Activated CD4-positive, alpha-beta T cell treated with anti-CD3 and anti-CD28 coated beads, Interleukin-2, amount 10 ng/mL, durations not matched to agents 24 days and 14 days (primary cell): ENCODE measurements at regions of chr22 and their contacts with region 1.

Region 1: DNA sequence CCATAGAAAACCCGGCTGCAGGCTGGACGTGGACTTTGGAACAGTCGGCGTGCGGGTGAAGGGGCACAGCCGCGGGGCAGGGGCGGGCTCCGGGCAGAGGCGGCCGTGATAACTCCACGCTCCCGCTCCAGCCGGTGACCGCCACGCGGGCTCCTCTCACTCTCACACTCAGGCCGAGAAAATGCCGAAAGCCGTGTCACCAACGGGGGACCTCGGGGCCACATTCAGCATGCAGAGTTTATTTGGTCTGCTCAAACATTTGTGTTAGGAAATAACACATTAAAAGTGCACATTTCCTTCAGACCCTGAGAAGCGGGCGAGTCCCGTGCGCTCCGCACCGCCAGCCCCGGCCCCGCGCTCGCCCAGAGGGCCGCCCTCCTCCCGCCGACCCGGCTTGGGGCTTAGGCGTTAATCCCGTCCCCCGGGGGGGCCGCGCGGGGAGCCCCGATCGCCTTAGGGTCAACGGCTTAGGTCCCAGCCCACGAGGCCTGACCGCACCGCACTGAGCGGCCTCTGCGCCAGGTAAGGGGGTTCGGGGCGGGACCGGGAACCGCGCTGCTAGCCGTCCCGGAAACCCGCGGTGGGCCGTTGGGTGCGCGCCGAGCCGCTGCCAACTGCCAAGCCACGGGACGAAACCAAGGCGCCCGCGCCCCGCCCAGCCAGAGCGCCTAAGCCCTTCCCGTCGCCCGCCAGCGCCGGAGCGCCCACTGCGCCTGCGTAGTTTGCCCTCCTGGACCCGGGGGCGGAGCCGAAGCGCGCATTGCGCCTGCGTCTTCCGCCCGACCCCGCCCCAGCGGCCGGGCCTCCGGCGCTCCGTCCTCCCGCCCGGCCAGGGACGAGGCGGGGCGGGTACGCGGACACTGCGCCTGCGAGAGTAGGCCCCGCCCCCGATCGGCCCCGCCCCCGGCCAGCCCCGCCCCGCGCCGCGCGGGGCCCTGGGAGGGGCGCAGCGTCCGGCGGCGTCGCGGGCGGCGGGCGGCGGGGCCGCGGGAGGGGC is at the start of gene ZBED4:
- DNase-seq: peak; percentile 100
- H3K4me3 Mint-ChIP-seq: peak within 1 kb of the TSS; percentile 92
- H3K27ac Mint-ChIP-seq: peak within 1 kb of the TSS; percentile 94
- H3K4me1 Mint-ChIP-seq: peaks cover 34% of the 10 kb centered on the region
- H3K27me3 Mint-ChIP-seq: peaks cover 5% of the 10 kb centered on the region
- total RNA-seq, gene ZBED4: 18.2 and 19.8 TPM in 2 replicates

Region 2: GRCh38 chr22:49717322-49717919 is 135.8 kb before region 1 on chr22:
- intact Hi-C with region 1: no loop called
- DNase-seq: no peak
- H3K4me3 Mint-ChIP-seq: no peak overlapping the region
- H3K27ac Mint-ChIP-seq: no peak overlapping the region
- H3K4me1 Mint-ChIP-seq: no peaks in the 10 kb centered on the region
- H3K27me3 Mint-ChIP-seq: no peaks in the 10 kb centered on the region

Region 3: DNA sequence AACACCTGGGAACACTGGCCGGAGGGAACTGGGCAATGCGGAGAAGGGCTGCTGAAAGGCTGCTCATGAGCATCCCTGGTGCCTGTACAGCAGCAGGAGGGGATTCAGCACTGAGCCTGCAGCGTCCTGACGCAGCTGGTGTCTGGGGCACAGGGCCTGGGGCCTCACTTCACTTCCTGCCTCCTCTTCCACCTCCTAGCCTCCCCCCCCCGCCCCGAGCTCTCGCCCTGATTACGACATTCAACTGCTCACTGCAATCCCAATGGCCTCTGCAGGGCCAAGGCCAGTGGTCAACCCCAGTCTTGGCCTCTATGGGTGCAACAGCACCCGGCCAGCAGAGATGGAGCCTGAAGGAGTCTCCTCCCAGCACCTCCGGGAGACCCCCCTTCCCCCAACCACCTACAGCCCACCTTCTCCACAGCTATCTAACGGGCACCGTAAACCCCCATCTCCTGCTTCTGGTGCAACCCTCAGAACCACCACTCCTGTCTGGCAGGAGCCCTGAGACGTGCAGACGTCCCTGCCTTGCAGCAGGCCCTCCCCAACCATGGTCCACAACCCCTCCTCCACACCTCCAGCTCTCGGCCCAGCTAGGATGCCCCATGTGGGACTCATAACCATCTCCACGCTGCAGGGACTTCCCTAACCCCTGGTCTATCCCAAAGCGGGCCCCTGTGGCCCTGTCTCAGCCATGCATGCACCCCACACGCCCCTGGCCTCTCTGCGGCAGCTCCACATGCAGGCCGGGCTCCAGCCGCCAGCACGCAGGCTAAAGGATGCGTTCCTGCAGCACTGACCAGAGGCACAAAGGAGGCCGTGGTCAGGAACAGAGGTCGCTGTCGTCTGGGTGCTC is 63.7 kb before region 1 on chr22:
- intact Hi-C with region 1: no loop called
- DNase-seq: peak; percentile 72
- H3K4me3 Mint-ChIP-seq: peak overlapping the region; percentile 71
- H3K27ac Mint-ChIP-seq: peak overlapping the region; percentile 79
- H3K4me1 Mint-ChIP-seq: peaks cover 51% of the 10 kb centered on the region
- H3K27me3 Mint-ChIP-seq: no peaks in the 10 kb centered on the region

Region 4: DNA sequence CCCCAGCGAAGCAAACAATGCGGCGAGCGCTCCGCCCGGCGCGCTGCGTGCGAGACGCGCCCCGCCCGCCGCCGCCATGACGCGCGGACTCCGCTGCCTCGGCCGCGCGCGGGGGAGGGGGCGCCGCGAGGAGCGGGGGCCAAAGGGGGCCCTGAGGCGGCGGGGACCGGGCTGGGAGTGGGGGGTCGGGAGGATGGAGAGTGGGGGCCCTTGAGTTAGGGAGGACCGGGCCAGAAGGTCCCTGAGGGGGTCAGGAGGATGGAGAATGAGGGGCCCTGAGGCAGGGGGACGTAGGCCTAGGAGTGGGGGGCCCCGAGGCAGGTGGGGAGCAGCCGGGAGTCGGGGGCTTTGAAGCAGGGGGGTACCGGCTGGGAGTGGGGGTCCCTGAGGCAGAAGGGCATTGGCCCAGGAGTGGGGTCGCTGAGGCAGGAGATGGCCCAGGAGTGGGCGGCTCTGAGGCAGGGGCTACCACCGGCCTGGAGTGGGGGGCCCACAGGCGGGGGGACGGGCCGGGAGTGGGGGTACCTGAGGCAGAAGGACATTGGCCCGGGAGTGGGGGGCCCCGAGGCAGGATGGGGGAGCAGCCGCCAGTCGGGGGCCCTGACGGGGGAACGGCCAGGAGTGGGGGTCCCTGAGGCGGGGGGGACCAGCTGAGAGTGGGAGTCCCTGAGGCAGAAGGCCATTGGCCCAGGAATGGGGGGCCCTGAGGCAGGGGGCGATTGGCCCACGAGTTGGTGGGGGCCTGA is 25.2 kb before region 1 on chr22 and contains the start of gene BRD1:
- intact Hi-C with region 1: loop called (anchors 2 kb)
- DNase-seq: peak; percentile 90
- H3K4me3 Mint-ChIP-seq: peak within 1 kb of the TSS; percentile 93
- H3K27ac Mint-ChIP-seq: peak within 1 kb of the TSS; percentile 89
- H3K4me1 Mint-ChIP-seq: peaks cover 42% of the 10 kb centered on the region
- H3K27me3 Mint-ChIP-seq: peaks cover 3% of the 10 kb centered on the region
- total RNA-seq, gene BRD1: 36.2 and 43.2 TPM in 2 replicates

Region 5: DNA sequence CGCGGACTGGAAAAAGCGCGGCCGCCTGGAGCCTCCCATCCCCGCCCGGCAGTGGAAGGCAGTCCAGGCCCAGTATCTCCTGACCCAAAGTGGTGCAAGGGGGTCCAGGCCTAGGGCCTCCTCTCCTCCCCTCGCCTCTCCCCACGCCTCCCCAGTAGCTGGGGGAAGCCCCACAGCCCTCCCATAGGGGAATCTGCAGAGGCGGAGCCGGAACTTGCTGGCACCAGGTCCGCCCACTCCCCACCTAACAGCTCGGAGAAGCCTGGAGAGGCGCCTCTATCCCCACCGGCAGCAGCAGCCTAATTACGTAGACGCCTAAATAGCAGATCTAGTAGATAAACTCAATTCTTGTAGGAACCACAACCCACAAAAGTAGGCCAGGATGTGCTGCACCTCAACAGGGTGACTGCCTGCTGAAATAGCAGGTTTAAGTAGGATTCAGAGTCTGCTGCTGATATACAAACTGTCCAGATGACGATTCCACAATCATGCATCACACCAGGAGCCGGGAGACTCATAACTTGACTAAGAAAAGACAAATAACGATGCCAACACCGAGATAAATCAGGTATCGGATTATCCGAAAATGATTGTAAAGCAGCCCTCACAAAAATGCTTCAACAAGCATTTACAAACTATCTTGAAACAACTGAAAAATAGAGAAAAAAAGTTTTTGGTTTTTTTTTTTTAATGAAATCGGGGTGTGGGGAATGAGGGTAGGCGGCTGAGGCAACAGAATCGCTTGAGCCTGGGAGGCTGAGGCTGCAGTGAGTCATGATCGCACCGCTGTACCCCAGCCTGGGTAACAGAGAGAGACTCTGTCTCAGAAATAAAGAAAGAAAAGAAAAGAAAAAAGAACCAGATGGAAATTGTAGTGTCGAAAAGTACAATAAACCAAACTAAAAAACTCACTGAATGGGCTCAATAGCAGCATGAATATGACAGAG is 14.2 kb before region 1 on chr22:
- intact Hi-C with region 1: loop called (anchors 1 kb)
- DNase-seq: peak; percentile 96
- H3K4me3 Mint-ChIP-seq: peak overlapping the region; percentile 90
- H3K27ac Mint-ChIP-seq: peak overlapping the region; percentile 96
- H3K4me1 Mint-ChIP-seq: peaks cover 26% of the 10 kb centered on the region
- H3K27me3 Mint-ChIP-seq: peaks cover 2% of the 10 kb centered on the region

Region 6: GRCh38 chr22:49917974-49918910 is 65.0 kb after region 1 on chr22 and contains the starts of genes ALG12 and CRELD2:
- intact Hi-C with region 1: loop called (anchors 1 kb)
- DNase-seq: peak; percentile 99
- H3K4me3 Mint-ChIP-seq: peak within 1 kb of the TSS; percentile 81
- H3K27ac Mint-ChIP-seq: peak within 1 kb of the TSS; percentile 85
- H3K4me1 Mint-ChIP-seq: peaks cover 18% of the 10 kb centered on the region
- H3K27me3 Mint-ChIP-seq: no peaks in the 10 kb centered on the region
- total RNA-seq, gene ALG12: 13.8 and 17.9 TPM in 2 replicates
- total RNA-seq, gene CRELD2: 46.8 and 47.4 TPM in 2 replicates

Region 7: DNA sequence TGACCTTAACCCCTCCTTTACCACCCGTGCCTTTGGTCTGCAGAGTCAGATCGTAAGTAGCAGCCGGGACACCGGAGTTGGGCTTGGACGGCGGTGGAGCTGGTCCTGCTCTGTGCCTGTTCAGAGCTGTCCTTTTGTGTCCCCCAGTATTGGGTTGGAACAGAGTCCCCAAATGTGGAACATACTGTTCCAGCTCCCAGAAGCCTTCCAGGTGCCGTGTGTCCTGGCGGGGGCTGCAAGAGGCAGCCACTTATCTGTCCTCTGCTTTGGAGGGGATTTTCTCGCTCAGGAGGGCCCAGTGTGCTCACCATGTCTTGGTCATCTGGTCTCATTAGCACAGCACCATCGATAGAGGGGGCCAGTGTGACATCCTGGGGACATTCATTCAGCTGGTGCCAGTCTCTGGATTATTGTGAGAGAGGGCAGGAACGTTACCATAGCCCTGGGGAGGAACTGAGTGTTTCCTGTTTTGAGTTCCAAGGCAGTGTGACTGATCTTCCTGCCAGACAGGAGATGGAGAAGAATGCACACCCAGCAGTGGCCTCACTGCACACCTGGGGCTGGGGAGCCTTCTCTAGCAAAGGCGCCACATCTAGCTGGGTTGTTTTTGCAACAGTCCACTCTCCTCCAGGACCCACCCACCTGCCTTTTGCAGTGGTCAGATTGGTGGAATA is 77.7 kb after region 1 on chr22:
- intact Hi-C with region 1: no loop called
- DNase-seq: peak; percentile 81
- H3K4me3 Mint-ChIP-seq: peak overlapping the region; percentile 58
- H3K27ac Mint-ChIP-seq: peak overlapping the region; percentile 79
- H3K4me1 Mint-ChIP-seq: peaks cover 33% of the 10 kb centered on the region
- H3K27me3 Mint-ChIP-seq: no peaks in the 10 kb centered on the region

Region 8: GRCh38 chr22:49960159-49961004 is 107.2 kb after region 1 on chr22 and contains the start of gene PIM3:
- intact Hi-C with region 1: loop called (anchors 5 kb)
- DNase-seq: peak; percentile 98
- H3K4me3 Mint-ChIP-seq: peak within 1 kb of the TSS; percentile 94
- H3K27ac Mint-ChIP-seq: peak within 1 kb of the TSS; percentile 95
- H3K4me1 Mint-ChIP-seq: peaks cover 17% of the 10 kb centered on the region
- H3K27me3 Mint-ChIP-seq: no peaks in the 10 kb centered on the region
- total RNA-seq, gene PIM3: 302 and 304 TPM in 2 replicates